Activated CD8-positive, alpha-beta T cell treated with anti-CD3 and anti-CD28 coated beads, Interleukin-2, amount 10 ng/mL, durations not matched to agents 7 days and 5 days (primary cell): ENCODE measurements at regions of chr4 and their contacts with region 1.

Region 1: DNA sequence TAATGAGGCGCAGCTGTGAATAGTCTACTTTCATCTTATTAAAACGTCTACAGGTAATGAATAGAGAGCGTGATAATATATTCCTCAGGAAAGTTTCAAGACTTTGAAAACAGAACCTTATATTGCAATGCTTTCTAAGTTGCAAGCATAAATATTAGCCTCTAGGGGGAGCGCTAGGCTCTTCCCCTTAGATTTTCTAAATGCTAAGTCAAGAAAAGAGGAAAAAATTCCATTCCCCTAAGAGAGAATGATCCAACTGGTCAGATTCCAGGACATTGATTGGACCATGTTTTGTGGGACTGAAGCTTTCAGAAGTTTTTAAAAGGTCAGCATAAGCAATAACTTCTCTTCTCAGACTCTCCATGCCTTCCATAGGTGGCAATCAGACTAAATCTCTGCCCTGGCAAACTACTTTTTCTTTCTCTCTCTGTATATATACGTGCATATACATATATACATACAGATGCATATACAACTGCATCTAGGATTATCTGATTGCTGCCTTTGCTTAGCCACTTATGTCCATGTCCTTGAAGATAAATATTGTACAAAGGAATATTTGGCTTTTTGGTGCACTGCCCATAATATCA is 492.9 kb downstream of the INPP4B start:
- DNase-seq: no peak
- ATAC-seq: no peak
- H3K4me3 Mint-ChIP-seq: no peak overlapping the region
- H3K27ac Mint-ChIP-seq: peak overlapping the region; percentile 50
- H3K4me1 Mint-ChIP-seq: peaks cover 74% of the 10 kb centered on the region
- H3K27me3 Mint-ChIP-seq: no peaks in the 10 kb centered on the region

Region 2: DNA sequence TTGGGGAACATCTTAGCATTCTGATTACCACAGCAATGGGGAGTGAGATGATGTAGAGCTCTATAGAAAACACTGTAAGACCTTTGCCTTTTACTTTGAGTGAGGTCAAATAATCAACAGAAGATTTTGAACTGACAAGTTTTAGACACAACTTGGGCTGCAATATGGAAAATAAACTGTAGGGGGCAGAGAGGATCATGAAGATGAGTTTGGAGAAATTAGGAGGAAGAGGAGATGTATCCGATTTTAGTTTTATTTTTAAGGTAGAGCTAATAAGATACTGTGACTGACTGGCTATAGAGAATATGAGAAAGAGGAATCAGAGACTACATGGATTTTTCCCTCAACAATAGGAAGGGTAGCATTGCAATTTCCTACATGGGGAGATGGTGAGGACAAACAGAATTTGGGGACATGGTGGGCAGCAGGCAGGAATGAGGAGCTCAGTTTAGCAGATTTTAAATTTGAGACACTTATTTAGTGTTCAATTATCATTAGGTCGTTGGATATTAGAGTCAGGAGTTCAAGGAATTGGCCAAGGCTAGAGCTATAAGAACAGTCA is 70.3 kb before region 1 on chr4:
- CTCF ChIA-PET with region 1: interaction called, 24 read pairs
- POLR2A ChIA-PET with region 1: no interaction called
- DNase-seq: no peak
- ATAC-seq: no peak
- H3K4me3 Mint-ChIP-seq: no peak overlapping the region
- H3K27ac Mint-ChIP-seq: no peak overlapping the region
- H3K4me1 Mint-ChIP-seq: peaks cover 6% of the 10 kb centered on the region
- H3K27me3 Mint-ChIP-seq: no peaks in the 10 kb centered on the region

Region 3: GRCh38 chr4:142365387-142365786 is 12.1 kb after region 1 on chr4:
- CTCF ChIA-PET with region 1: interaction called, 51 read pairs
- POLR2A ChIA-PET with region 1: interaction called, 5 read pairs
- DNase-seq: no peak
- ATAC-seq: no peak
- H3K4me3 Mint-ChIP-seq: no peak overlapping the region
- H3K27ac Mint-ChIP-seq: no peak overlapping the region
- H3K4me1 Mint-ChIP-seq: peaks cover 29% of the 10 kb centered on the region
- H3K27me3 Mint-ChIP-seq: no peaks in the 10 kb centered on the region

Region 4: GRCh38 chr4:142379277-142380057 is 26.2 kb after region 1 on chr4:
- CTCF ChIA-PET with region 1: interaction called, 18 read pairs
- POLR2A ChIA-PET with region 1: interaction called, 3 read pairs
- DNase-seq: no peak
- ATAC-seq: no peak
- H3K4me3 Mint-ChIP-seq: no peak overlapping the region
- H3K27ac Mint-ChIP-seq: no peak overlapping the region
- H3K4me1 Mint-ChIP-seq: peaks cover 38% of the 10 kb centered on the region
- H3K27me3 Mint-ChIP-seq: no peaks in the 10 kb centered on the region

Region 5: DNA sequence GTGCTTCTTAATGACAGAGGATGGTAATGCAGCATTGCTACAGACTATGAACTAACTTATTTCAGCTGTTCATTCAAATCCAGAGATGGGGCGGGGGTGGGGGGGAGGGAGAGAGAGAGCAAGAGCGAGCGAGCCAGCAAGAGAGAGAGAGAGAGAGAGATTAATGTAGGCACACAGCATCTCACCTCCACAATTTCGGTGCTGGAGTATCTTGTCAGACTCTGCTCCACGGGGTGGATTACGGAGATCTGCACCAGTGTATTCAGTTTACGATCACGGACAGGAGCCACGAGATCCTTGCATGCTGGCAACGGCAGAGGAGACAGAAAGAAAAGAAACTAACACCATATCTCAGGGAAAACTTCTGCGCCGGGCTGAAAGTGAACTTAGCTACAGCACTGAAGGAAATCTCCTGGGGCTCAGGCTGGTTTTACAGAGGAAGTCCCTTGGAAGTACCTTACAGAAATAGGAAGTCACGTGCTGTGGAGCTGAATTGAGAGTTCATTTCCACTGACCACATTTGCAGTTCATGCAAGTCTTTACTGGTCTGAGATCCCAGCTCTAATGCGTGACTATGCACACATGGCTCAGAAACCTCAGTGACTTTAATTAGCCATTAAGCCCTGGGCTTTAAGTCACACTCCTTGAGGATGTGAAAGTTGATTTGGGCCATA is 51.9 kb after region 1 on chr4:
- CTCF ChIA-PET with region 1: interaction called, 157 read pairs
- POLR2A ChIA-PET with region 1: interaction called, 12 read pairs
- DNase-seq: peak; percentile 74
- ATAC-seq: peak; percentile 66
- H3K4me3 Mint-ChIP-seq: peak overlapping the region; percentile 92
- H3K27ac Mint-ChIP-seq: peak overlapping the region; percentile 97
- H3K4me1 Mint-ChIP-seq: peaks cover 70% of the 10 kb centered on the region
- H3K27me3 Mint-ChIP-seq: no peaks in the 10 kb centered on the region

Region 6: GRCh38 chr4:142416711-142417275 is 63.5 kb after region 1 on chr4:
- CTCF ChIA-PET with region 1: interaction called, 157 read pairs
- POLR2A ChIA-PET with region 1: interaction called, 9 read pairs
- DNase-seq: no peak
- ATAC-seq: peak; percentile 90
- H3K4me3 Mint-ChIP-seq: peak overlapping the region; percentile 32
- H3K27ac Mint-ChIP-seq: peak overlapping the region; percentile 89
- H3K4me1 Mint-ChIP-seq: peaks cover 36% of the 10 kb centered on the region
- H3K27me3 Mint-ChIP-seq: no peaks in the 10 kb centered on the region

Region 7: GRCh38 chr4:142574306-142574705 is 221.1 kb after region 1 on chr4:
- CTCF ChIA-PET with region 1: no interaction called
- POLR2A ChIA-PET with region 1: no interaction called
- DNase-seq: no peak
- ATAC-seq: no peak
- H3K4me3 Mint-ChIP-seq: no peak overlapping the region
- H3K27ac Mint-ChIP-seq: no peak overlapping the region
- H3K4me1 Mint-ChIP-seq: no peaks in the 10 kb centered on the region
- H3K27me3 Mint-ChIP-seq: no peaks in the 10 kb centered on the region